PC-9 (cell line): ENCODE measurements at regions of chr17 and their contacts with region 1.

Region 1: DNA sequence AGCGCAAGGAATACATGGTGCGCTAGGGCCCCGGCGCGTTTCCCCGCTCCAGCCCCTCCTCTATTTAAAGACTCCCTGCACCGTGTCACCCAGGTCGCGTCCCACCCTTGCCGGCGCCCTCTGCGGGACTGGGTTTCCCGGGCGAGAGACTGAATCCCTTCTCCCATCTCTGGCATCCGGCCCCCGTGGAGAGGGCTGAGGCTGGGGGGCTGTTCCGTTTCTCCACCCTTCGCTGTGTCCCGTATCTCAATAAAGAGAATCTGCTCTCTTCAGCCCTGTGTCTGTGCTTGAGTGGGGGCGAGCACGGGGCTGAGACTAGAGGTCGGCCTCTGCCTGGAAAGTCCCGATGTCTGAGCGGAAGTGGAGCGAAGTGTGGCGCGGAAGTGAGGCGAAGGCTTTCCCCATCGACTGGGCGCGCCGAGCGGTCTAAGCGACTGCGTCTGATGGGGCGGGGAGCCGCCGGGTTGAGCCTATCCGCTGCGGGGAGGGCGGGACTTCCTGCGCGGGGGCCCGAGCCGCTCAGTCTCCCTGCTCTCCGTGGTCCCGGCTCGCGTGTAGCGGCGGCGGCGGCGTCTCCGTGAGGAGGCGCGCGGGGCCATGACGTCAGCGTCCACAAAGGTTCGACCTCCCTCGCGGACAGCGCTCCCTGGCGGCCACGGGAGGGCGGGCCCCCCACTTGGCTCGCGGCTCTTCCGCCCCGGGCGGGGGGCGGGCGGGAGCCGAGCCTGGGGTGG is 2.0 kb downstream of the RNASEK start:
- DNase-seq: peak; percentile 91 to 99
- H3K4me3 ChIP-seq: peak overlapping the region; percentile 97
- H3K27ac ChIP-seq: peak overlapping the region; percentile 81
- H3K4me1 ChIP-seq: peaks cover 21% of the 10 kb centered on the region
- H3K27me3 ChIP-seq: no peaks in the 10 kb centered on the region
- CTCF ChIP-seq: peak; percentile 72

Region 2: GRCh38 chr17:6435968-6436367 is 578.5 kb before region 1 on chr17:
- CTCF ChIA-PET with region 1: no interaction called
- POLR2A ChIA-PET with region 1: no interaction called
- intact Hi-C with region 1: loop called (anchors 2 kb)
- DNase-seq: peak; percentile 45 to 69
- H3K4me3 ChIP-seq: no peak overlapping the region
- H3K27ac ChIP-seq: no peak overlapping the region
- H3K4me1 ChIP-seq: no peaks in the 10 kb centered on the region
- H3K27me3 ChIP-seq: peaks cover 52% of the 10 kb centered on the region
- CTCF ChIP-seq: peak; percentile 93

Region 3: DNA sequence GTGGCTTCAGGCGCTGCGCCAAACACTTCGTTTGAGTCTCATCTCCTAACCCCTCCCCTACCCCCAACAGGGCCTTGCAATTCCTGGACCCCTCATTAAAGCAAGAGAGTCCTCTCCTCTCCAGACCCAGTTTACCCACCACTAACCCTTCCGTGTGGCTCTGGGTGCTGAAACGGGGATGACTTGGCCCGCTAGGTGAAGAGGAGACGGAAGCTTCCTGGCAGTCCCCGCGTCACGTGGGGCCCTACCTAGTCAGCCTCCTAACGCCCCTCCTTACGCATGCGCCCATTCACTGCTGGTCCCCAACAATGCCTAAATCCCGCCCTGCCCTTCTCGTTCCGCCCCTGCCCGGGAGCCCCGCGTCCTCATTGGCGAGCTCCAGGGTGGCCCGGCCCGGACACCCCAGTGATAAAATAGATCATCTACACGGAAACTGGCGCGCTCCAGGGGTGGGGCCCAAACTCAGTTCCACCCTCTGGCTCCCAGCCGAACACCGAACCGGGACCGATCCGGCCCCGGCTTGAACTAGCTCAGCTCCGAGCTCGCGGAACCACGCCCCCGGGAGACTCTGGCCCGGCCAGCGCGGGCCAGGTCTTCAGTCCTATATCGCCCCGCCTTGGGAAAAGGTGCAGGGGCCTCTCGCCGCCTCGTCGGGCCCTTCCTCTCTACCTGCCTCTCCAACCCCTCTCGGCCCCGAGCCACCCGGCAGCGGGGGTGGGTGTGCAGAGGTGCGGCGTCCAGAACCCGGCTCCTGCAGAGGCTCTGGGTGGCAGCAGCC is 21.4 kb after region 1 on chr17 and contains the start of gene SLC16A13:
- CTCF ChIA-PET with region 1: no interaction called
- POLR2A ChIA-PET with region 1: interaction called, 18 read pairs
- intact Hi-C with region 1: loop called (anchors 2 kb)
- DNase-seq: peak; percentile 93 to 99
- H3K4me3 ChIP-seq: peak within 1 kb of the TSS; percentile 76
- H3K27ac ChIP-seq: peak within 1 kb of the TSS; percentile 71
- H3K4me1 ChIP-seq: peaks cover 20% of the 10 kb centered on the region
- H3K27me3 ChIP-seq: no peaks in the 10 kb centered on the region
- CTCF ChIP-seq: no peak
- total RNA-seq, gene SLC16A13: 33.4 and 40.6 TPM in 2 replicates